T-cell (primary cell): ENCODE measurements at regions of chr17 and their contacts with region 1.

Region 1: DNA sequence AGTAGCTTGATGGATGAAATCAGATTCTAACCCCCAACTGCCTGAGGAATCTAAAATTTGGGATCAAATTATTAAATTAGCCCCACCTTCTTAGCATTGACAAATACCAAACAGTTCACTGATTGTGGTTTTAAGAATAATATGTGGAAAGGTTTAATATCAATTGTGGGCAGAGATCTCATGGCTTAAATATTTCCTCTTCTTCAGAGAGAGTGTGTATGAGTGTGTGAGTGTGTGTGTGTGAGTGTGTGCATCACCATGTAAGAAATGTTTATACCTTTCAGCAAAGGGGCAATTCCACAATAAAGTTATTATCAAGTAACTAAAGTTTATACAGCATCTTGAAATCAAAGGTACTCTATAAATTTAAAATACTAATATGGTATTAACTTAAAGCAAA is 3.2 kb downstream of the SMURF2 start:
- DNase-seq: peak in 1 of 35 experiments; percentile 27
- ATAC-seq: no peak
- H3K4me3 ChIP-seq: no peak overlapping the region
- H3K4me3 Mint-ChIP-seq: peak overlapping the region; percentile 10 to 56 (median 42)
- H3K27ac ChIP-seq: no peak overlapping the region
- H3K27ac Mint-ChIP-seq: peak overlapping the region; percentile 9 to 36
- H3K4me1 ChIP-seq: peaks cover 15 to 23% of the 10 kb centered on the region in 2 experiments
- H3K4me1 Mint-ChIP-seq: peaks cover 50 to 53% (median 51%) of the 10 kb centered on the region in 3 donors
- H3K27me3 ChIP-seq: no peaks in the 10 kb centered on the region
- H3K27me3 Mint-ChIP-seq: no peaks in the 10 kb centered on the region

Region 2: GRCh38 chr17:64687376-64687775 is 28.4 kb after region 1 on chr17:
- CTCF ChIA-PET with region 1: no interaction called
- POLR2A ChIA-PET with region 1: interaction called in 1 of 2 experiments, 11 read pairs
- DNase-seq: no peak
- ATAC-seq: no peak
- H3K4me3 ChIP-seq: no peak overlapping the region
- H3K4me3 Mint-ChIP-seq: no peak overlapping the region
- H3K27ac ChIP-seq: no peak overlapping the region
- H3K27ac Mint-ChIP-seq: no peak overlapping the region
- H3K4me1 ChIP-seq: no peaks in the 10 kb centered on the region
- H3K4me1 Mint-ChIP-seq: no peaks in the 10 kb centered on the region
- H3K27me3 ChIP-seq: no peaks in the 10 kb centered on the region
- H3K27me3 Mint-ChIP-seq: no peaks in the 10 kb centered on the region